ENCODE measurements at regions of chr4 and their contacts with region 1.

Region 1: GRCh38 chr4:113547487-113548042 is 214.0 kb downstream of the CAMK2D start:
- DNase-seq: peak; percentile 77
- H3K4me3 ChIP-seq: no peak overlapping the region
- H3K27ac ChIP-seq: no peak overlapping the region
- H3K27me3 ChIP-seq: no peaks in the 10 kb centered on the region
- CTCF ChIP-seq: peak; percentile 96

Region 2: GRCh38 chr4:113316879-113317278 is 230.7 kb before region 1 on chr4:
- CTCF ChIA-PET with region 1: no interaction called
- POLR2A ChIA-PET with region 1: no interaction called
- DNase-seq: no peak
- H3K4me3 ChIP-seq: no peak overlapping the region
- H3K27ac ChIP-seq: no peak overlapping the region
- H3K27me3 ChIP-seq: no peaks in the 10 kb centered on the region
- CTCF ChIP-seq: no peak

Region 3: GRCh38 chr4:113339430-113339813 is 208.1 kb before region 1 on chr4:
- CTCF ChIA-PET with region 1: no interaction called
- POLR2A ChIA-PET with region 1: no interaction called
- DNase-seq: no peak
- H3K4me3 ChIP-seq: no peak overlapping the region
- H3K27ac ChIP-seq: no peak overlapping the region
- H3K27me3 ChIP-seq: no peaks in the 10 kb centered on the region
- CTCF ChIP-seq: no peak

Region 4: GRCh38 chr4:113534711-113535110 is 12.9 kb before region 1 on chr4:
- CTCF ChIA-PET with region 1: interaction called, 29 read pairs
- POLR2A ChIA-PET with region 1: no interaction called
- DNase-seq: no peak
- H3K4me3 ChIP-seq: no peak overlapping the region
- H3K27ac ChIP-seq: no peak overlapping the region
- H3K27me3 ChIP-seq: no peaks in the 10 kb centered on the region
- CTCF ChIP-seq: no peak

Region 5: DNA sequence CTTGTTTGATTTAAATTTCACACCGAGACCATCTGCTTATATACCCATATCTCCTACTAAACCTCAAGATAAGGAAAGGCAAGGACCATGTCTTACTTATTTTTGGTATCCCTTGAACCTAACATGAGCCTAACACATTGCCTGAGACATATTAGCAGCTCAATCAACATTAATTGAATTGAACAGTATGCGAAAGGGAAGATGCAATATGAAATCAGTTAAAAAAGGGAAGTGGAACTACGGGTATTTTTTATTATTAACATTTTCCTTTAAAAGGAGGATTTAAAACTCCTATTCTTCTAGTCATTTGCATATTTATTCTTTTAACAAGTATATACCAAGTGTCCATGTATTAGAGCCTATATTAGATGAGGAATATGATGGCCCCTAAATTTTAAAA is 16.9 kb after region 1 on chr4:
- CTCF ChIA-PET with region 1: interaction called, 32 read pairs
- POLR2A ChIA-PET with region 1: no interaction called
- DNase-seq: no peak
- H3K4me3 ChIP-seq: no peak overlapping the region
- H3K27ac ChIP-seq: no peak overlapping the region
- H3K27me3 ChIP-seq: no peaks in the 10 kb centered on the region
- CTCF ChIP-seq: no peak

Region 6: GRCh38 chr4:113574636-113575103 is 27.1 kb after region 1 on chr4:
- CTCF ChIA-PET with region 1: interaction called, 17 read pairs
- POLR2A ChIA-PET with region 1: no interaction called
- DNase-seq: peak; percentile 57
- H3K4me3 ChIP-seq: no peak overlapping the region
- H3K27ac ChIP-seq: peak overlapping the region; percentile 49
- H3K27me3 ChIP-seq: no peaks in the 10 kb centered on the region
- CTCF ChIP-seq: no peak

Region 7: DNA sequence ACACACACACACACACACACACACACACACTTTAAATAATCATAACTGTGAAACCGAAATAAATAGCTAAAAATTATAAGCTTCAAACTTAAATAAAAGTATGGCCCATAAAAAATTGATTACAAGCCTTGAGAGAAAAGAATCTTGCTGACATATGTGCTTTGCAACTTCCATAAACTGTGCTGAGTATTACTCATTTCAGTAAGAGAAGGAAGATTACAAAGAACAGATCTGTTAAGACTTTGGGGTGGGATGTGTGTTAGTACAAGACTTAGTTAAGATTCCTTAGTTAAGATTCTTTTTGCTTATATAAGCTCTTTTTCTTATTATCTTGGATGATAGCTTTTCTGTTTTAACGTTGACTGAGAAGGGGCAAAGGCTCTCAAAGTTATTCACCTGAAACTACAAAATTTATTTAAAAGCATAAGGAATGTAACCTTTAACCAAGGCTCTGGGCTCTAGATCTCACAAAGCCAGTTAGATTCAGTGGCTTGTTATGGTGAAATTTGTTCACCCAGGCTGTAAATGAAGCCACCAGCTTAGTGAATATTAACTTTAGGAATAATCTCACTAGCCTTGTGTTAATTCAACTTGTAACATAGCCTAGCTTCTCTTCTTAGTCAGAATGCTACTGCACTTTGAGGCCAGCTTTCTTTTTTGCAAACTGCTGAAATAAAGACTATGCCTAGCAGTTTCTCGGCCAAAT is 373.7 kb after region 1 on chr4:
- CTCF ChIA-PET with region 1: no interaction called
- POLR2A ChIA-PET with region 1: no interaction called
- DNase-seq: no peak
- H3K4me3 ChIP-seq: no peak overlapping the region
- H3K27ac ChIP-seq: no peak overlapping the region
- H3K27me3 ChIP-seq: no peaks in the 10 kb centered on the region
- CTCF ChIP-seq: no peak

Measured in AG04450 (cell line).